Activated CD4-positive, alpha-beta T cell treated with anti-CD3 and anti-CD28 coated beads for 36 hours (primary cell): ENCODE measurements at regions of chr1 and their contacts with region 1.

Region 1: GRCh38 chr1:45339789-45340570 is at the starts of genes MUTYH and TOE1:
- DNase-seq: peak; percentile 98
- ATAC-seq: peak; percentile 86
- H3K4me3 Mint-ChIP-seq: peak within 1 kb of the TSS; percentile 100
- H3K27ac Mint-ChIP-seq: peak within 1 kb of the TSS; percentile 100
- H3K4me1 Mint-ChIP-seq: peaks cover 27% of the 10 kb centered on the region
- H3K27me3 Mint-ChIP-seq: no peaks in the 10 kb centered on the region
- total RNA-seq, gene MUTYH: 48.6 to 53.7 TPM
- total RNA-seq, gene TOE1: 29.8 to 42.3 TPM

Region 2: DNA sequence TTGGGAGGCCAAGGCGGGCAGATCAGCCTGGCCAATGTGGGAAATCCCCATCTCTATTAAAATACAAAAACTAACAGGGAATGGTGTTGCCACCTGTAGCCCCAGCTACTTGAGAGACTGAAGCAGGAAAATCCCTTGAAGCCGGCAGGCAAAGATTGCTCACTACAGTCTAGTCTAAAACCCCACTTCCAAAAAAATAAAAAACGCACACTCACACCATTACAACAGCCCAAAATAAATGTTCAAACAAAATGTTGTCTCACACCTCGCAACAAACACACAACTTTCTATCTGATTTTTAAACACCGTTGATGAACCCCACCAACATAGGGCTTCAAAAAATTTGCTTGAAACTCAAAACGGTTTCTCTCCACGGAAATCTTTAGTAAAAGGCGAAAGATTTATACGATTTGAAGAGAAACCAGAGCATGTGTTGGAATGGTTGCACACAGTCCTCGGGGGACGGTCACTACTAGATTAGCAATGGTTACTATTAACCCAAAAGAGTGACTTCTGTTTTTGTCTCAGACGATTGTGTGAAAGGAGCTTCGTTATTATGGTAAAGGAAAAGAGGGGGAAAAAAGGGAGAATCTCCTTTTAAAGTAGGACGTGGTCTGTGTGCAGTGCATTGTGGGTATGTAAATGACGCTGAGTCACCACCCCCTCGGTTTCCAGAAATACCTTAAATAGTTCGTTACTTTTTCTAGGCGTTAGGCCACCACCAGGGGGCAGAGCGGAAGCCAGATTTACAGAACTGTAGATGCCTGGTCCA is 609.1 kb before region 1 on chr1 and contains the start of gene RNU5D-1:
- CTCF ChIA-PET with region 1: no interaction called
- POLR2A ChIA-PET with region 1: interaction called, 17 read pairs
- intact Hi-C with region 1: no loop called
- DNase-seq: peak; percentile 98
- ATAC-seq: peak; percentile 85
- H3K4me3 Mint-ChIP-seq: peak within 1 kb of the TSS; percentile 67
- H3K27ac Mint-ChIP-seq: peak within 1 kb of the TSS; percentile 100
- H3K4me1 Mint-ChIP-seq: peaks cover 45% of the 10 kb centered on the region
- H3K27me3 Mint-ChIP-seq: no peaks in the 10 kb centered on the region
- total RNA-seq, gene RNU5D-1: not detected

Region 3: GRCh38 chr1:44807262-44808062 is 532.5 kb before region 1 on chr1 and contains the start of gene DYNLT4:
- CTCF ChIA-PET with region 1: interaction called, 3 read pairs
- POLR2A ChIA-PET with region 1: interaction called, 19 read pairs
- intact Hi-C with region 1: no loop called
- DNase-seq: peak; percentile 94
- ATAC-seq: peak; percentile 57
- H3K4me3 Mint-ChIP-seq: peak within 1 kb of the TSS; percentile 87
- H3K27ac Mint-ChIP-seq: peak within 1 kb of the TSS; percentile 99
- H3K4me1 Mint-ChIP-seq: peaks cover 92% of the 10 kb centered on the region
- H3K27me3 Mint-ChIP-seq: no peaks in the 10 kb centered on the region
- total RNA-seq, gene DYNLT4: 0.32 TPM in 1 of 2 experiments, not detected in the other

Region 4: DNA sequence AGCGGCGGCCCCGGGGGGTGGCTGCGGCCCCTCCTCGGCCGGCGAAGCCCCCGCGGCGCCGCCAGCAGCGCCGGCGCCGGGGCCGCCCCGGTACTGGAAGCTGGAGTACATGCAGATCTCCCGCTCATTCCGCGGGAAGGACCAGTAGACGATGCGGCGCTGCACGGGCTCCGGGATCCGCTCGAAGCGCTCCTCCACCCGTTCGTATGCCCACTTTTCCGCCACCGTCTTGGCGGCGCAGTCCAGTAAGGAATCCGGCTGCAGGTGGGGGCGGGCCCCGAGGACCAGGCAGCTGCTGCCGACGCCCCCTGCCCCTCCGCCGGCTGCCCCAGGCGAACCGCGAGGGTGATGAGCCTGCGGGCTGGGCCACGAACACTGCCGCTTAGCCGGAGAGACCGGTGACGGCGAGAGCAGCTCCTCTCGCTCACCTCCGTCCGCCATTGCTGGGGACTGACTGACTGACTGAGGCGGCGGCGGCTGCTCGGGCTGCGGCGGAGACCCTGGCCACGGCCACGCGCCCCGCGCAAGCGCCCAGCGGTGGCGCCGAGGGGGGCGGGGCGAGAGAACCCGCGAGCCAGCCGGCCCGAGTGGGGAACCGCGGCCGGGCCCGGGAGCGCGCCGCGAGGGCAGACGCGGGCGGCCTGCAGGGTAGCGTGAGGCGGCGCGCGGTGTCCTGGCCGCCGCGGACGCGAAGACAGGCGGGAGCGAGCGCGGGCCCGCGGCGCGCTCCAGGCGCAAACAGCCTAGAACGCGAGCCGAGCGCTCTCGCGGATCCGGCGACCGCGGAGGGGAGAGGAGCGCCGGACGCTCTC is 133.9 kb before region 1 on chr1 and contains the start of gene ZSWIM5:
- CTCF ChIA-PET with region 1: interaction called, 3 read pairs
- POLR2A ChIA-PET with region 1: no interaction called
- intact Hi-C with region 1: loop called in 1 of 2 experiments (anchors 1 kb)
- DNase-seq: peak; percentile 75
- ATAC-seq: peak; percentile 80
- H3K4me3 Mint-ChIP-seq: peak within 1 kb of the TSS; percentile 82
- H3K27ac Mint-ChIP-seq: peak within 1 kb of the TSS; percentile 87
- H3K4me1 Mint-ChIP-seq: peaks cover 33% of the 10 kb centered on the region
- H3K27me3 Mint-ChIP-seq: peaks cover 18% of the 10 kb centered on the region
- total RNA-seq, gene ZSWIM5: 0.63 to 0.69 TPM

Region 5: DNA sequence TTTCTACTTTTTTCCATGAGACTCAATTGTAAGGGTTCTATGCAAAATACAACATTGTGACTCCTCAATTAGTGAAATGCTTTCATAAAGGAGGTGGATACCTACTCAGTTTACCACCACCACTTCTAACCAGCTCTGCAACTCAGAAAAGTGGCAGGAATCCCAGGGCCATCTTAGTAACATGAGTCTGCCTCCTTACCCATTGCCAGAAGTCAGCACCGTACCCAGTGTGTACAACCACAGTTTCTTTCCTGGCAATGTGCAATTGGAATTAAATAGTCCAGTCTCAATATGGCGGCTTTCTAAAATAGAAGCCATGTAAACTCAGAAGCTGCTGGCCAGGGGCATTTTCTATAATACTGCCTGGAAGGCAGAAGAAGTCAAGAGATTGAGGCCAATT is 118.9 kb after region 1 on chr1:
- CTCF ChIA-PET with region 1: no interaction called
- POLR2A ChIA-PET with region 1: no interaction called
- intact Hi-C with region 1: no loop called
- DNase-seq: no peak
- ATAC-seq: no peak
- H3K4me3 Mint-ChIP-seq: no peak overlapping the region
- H3K27ac Mint-ChIP-seq: no peak overlapping the region
- H3K4me1 Mint-ChIP-seq: no peaks in the 10 kb centered on the region
- H3K27me3 Mint-ChIP-seq: no peaks in the 10 kb centered on the region

Region 6: GRCh38 chr1:45499415-45499769 is 159.4 kb after region 1 on chr1:
- CTCF ChIA-PET with region 1: interaction called, 13 read pairs
- POLR2A ChIA-PET with region 1: interaction called, 20 read pairs
- intact Hi-C with region 1: loop called (anchors 1 kb)
- DNase-seq: peak; percentile 45
- ATAC-seq: no peak
- H3K4me3 Mint-ChIP-seq: peak overlapping the region; percentile 81
- H3K27ac Mint-ChIP-seq: peak overlapping the region; percentile 92
- H3K4me1 Mint-ChIP-seq: peaks cover 23% of the 10 kb centered on the region
- H3K27me3 Mint-ChIP-seq: no peaks in the 10 kb centered on the region